ENCODE measurements at regions of chr7 and their contacts with region 1.

Region 1: GRCh38 chr7:128739048-128739962 is at the start of gene CALU:
- DNase-seq: peak; percentile 79
- H3K4me3 ChIP-seq: peak within 1 kb of the TSS; percentile 97
- CTCF ChIP-seq: no peak

Region 2: DNA sequence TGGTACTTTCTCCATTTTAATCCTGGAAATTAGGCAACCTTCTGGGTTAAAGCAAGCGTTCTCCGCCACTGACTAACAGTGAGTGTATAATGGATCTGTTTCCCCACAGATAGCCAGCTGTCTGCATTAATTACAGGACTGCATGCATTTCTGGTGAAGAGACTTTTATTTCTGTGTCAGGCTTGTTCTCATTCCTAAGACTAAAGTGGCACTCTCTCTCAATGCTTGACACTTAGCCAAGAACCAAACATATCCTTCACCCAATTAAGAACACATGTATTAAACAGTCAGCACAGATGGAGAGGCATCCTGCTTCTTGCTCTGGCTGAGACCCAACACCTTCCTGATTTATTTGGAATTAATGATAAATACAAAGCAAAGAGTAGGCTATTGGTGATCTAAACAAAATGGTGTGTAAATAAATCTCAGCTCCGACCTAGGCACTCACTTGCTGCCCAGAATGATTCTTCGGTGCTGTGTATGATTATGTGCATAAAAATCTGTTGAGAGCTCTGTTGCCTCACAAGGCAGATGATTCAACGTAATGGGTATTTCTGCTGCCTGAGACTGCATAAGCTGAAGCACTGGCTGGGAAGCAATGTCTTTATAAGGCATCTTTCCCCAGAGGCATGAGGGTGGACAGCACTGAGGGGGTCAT is 16.6 kb after region 1 on chr7:
- CTCF ChIA-PET with region 1: interaction called, 9 read pairs
- POLR2A ChIA-PET with region 1: interaction called, 74 read pairs
- DNase-seq: peak; percentile 90
- H3K4me3 ChIP-seq: no peak overlapping the region
- CTCF ChIP-seq: no peak

Measured in AG04449 (cell line).